Dendritic cell treated with granulocyte-macrophage colony-stimulating factor and Interleukin-4, amounts not matched to agents 40 ng/mL and 50 ng/mL, for 4 days (primary cell): ENCODE measurements at regions of chr17 and their contacts with region 1.

Region 1: GRCh38 chr17:80575057-80575875 is 30.6 kb downstream of the RPTOR start:
- H3K4me3 Mint-ChIP-seq: no peak overlapping the region
- H3K27ac Mint-ChIP-seq: no peak overlapping the region
- H3K4me1 Mint-ChIP-seq: peaks cover 20% of the 10 kb centered on the region
- H3K27me3 Mint-ChIP-seq: no peaks in the 10 kb centered on the region

Region 2: DNA sequence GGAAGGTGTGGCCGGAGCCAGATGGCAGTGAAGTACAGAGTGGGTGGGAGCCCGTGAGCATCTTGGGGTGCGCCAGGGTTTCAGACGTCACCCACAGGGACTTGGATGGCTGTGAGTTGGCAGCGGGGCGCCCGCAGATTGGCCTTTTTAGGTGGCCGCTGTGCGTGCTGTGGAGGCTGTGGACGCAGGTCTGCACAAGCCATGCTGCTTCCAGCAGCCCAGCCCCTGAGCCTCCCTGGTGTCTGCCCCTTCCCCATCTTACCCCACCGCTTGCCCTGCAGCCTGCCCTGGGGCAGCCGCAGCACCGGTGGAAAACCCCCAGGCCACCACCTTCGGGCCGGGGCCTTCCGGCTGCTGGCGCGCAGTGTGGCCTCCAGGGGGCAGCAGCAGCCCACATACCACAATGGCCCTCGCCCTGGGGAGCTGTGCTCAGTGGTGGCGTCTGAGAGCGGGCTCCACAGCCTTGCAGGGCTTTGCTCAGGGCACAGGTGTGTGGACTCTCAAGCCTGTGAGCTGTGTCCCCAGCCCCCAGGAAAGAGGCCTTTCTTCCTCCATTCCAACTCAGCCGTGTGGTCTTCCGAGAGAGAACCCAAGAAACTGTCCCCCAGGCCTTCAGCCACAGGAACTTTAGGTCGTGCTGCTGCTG is 148.5 kb before region 1 on chr17:
- intact Hi-C with region 1: loop called (anchors 1 kb)
- H3K4me3 Mint-ChIP-seq: no peak overlapping the region
- H3K27ac Mint-ChIP-seq: no peak overlapping the region
- H3K4me1 Mint-ChIP-seq: peaks cover 12% of the 10 kb centered on the region
- H3K27me3 Mint-ChIP-seq: peaks cover 9% of the 10 kb centered on the region

Region 3: DNA sequence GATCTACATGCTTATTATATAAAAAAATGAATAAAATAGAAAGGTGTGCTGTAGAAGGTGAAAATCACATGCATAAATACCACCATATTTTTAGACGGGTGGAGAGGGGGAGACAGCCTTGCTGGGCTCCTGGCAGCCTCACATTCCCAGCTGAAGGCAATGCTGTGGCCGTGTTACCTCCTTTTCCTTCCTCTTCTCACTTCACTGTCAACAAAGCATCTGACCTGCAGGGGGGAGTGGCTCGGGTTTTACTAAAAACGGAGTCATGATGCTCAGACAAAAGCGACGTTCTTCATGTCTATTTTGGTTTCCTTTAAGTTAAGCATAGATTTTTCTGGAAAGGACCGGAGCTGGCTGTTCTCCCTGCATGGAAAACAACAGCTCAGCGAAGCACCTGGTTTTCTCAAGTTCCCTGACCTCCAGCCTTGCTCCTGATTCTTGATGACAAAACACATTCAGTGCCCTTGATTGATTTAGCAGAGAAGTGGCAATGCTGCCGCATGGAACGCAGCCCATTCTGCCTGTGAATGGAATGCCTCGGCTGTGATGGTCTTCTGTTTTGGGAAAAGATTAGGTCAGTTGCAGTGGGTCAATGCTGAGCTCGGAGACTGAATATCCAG is 36.1 kb before region 1 on chr17:
- intact Hi-C with region 1: no loop called
- H3K4me3 Mint-ChIP-seq: no peak overlapping the region
- H3K27ac Mint-ChIP-seq: no peak overlapping the region
- H3K4me1 Mint-ChIP-seq: peaks cover 8% of the 10 kb centered on the region
- H3K27me3 Mint-ChIP-seq: peaks cover 33% of the 10 kb centered on the region

Region 4: GRCh38 chr17:80559825-80560251 is 15.4 kb before region 1 on chr17:
- intact Hi-C with region 1: no loop called
- H3K4me3 Mint-ChIP-seq: no peak overlapping the region
- H3K27ac Mint-ChIP-seq: no peak overlapping the region
- H3K4me1 Mint-ChIP-seq: peaks cover 12% of the 10 kb centered on the region
- H3K27me3 Mint-ChIP-seq: no peaks in the 10 kb centered on the region